Mammary epithelial cell (primary cell): ENCODE measurements at regions of chr11 and their contacts with region 1.

Region 1: DNA sequence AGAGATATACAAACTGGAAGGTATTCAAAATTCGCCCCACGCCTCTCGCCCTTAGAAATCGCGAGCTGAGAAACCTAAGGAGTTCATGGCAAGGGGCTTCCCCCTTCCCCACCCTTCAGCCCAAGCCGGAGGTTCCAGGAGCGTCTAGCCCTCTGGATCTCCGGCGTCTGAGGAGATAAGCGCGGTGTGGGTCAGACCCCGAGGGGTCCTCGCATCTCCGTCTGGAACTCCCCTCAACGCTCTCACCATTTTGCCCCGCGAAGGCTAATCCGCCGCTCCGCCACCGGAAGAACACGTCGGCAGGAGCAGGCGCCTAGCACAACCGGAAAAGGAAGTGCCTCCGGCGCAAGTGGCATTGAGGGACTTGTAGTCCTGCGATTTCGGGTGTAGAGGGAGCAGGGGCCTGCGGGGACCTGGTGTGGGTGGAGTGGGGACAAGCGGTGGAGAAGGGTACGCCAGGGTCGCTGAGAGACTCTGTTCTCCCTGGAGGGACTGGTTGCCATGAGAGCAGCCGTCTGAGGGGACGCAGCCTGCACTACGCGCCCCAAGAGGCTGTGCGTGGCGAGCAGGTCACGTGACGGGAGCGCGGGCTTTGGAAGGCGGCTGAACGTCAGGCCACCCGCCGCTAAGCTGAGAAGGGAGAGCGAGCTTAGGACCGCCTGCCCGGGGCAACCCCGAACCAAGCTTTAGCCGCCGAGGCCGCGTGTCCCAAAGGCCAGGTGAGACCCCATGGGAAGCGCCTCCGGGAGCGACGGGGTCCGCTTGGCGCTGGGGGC is at the starts of genes FEN1 and TMEM258:
- DNase-seq: peak; percentile 95
- H3K4me3 ChIP-seq: peak within 1 kb of the TSS; percentile 63 to 93 (median 92)
- H3K27ac ChIP-seq: peak within 1 kb of the TSS; percentile 96
- H3K4me1 ChIP-seq: peaks cover 13% of the 10 kb centered on the region
- H3K27me3 ChIP-seq: no peaks in the 10 kb centered on the region
- CTCF ChIP-seq: no peak
- total RNA-seq, gene FEN1: 11.7 to 46.1 TPM
- total RNA-seq, gene TMEM258: 48.2 to 99.7 TPM

Region 2: GRCh38 chr11:61695917-61696316 is 96.6 kb before region 1 on chr11:
- CTCF ChIA-PET with region 1: no interaction called
- dilution Hi-C with region 1: no loop called
- in situ Hi-C with region 1: no loop called
- intact Hi-C with region 1: loop called (anchors 1 kb)
- DNase-seq: peak; percentile 91
- H3K4me3 ChIP-seq: no peak overlapping the region
- H3K27ac ChIP-seq: peak overlapping the region; percentile 28
- H3K4me1 ChIP-seq: peaks cover 60% of the 10 kb centered on the region
- H3K27me3 ChIP-seq: no peaks in the 10 kb centered on the region
- CTCF ChIP-seq: no peak

Region 3: GRCh38 chr11:61827571-61828378 is 35.3 kb after region 1 on chr11 and contains the start of gene FADS2:
- CTCF ChIA-PET with region 1: no interaction called
- dilution Hi-C with region 1: no loop called
- in situ Hi-C with region 1: no loop called
- intact Hi-C with region 1: loop called (anchors 1 kb)
- DNase-seq: peak; percentile 60
- H3K4me3 ChIP-seq: peak within 1 kb of the TSS; percentile 50 to 74 (median 58)
- H3K27ac ChIP-seq: no peak within 1 kb of the TSS
- H3K4me1 ChIP-seq: peaks cover 11% of the 10 kb centered on the region
- H3K27me3 ChIP-seq: no peaks in the 10 kb centered on the region
- CTCF ChIP-seq: no peak
- total RNA-seq, gene FADS2: 70.7 to 222 TPM

Region 4: DNA sequence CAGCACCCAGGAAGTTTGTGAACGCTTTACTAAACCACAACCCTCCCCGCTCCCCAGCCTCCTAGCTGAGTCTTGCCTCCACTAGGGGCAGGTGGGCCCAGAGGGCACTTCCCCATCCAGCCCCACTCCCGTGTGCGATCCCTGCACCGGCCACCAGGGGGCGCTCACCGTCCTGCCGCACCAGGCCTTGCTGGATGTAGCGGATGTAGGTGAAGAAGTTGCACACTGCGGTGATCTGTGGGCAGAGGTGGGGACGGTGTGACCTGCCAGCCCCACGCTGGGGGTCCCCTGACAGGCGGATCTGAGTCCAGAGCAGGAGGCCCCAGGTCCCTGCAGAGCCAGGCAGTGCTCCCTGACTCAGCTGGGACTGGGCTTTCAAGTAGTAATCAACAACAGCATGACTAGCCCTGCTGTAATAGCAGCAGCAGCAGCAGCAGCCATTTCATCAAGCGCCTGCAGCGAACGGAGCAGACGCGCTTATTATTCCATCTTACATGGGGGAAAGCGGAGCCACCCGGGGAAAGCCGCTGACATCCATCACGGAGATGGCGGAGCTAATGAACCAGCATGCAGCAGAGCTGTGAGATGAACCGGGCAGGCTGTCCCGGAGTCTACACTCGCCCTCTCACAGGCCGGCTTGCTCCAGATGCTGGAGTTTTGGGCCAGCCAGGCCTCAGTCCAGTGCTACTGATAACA is 106.8 kb after region 1 on chr11:
- CTCF ChIA-PET with region 1: no interaction called
- dilution Hi-C with region 1: no loop called
- in situ Hi-C with region 1: no loop called
- intact Hi-C with region 1: loop called (anchors 1 kb)
- DNase-seq: peak; percentile 52
- H3K4me3 ChIP-seq: no peak overlapping the region
- H3K27ac ChIP-seq: no peak overlapping the region
- H3K4me1 ChIP-seq: peaks cover 19% of the 10 kb centered on the region
- H3K27me3 ChIP-seq: no peaks in the 10 kb centered on the region
- CTCF ChIP-seq: peak; percentile 96 to 99

Region 5: GRCh38 chr11:62054484-62055121 is 262.1 kb after region 1 on chr11:
- CTCF ChIA-PET with region 1: interaction called, 3 read pairs
- dilution Hi-C with region 1: no loop called
- in situ Hi-C with region 1: loop called in 1 of 2 experiments (anchors 25 kb)
- intact Hi-C with region 1: loop called (anchors 2 kb)
- DNase-seq: peak; percentile 42
- H3K4me3 ChIP-seq: no peak overlapping the region
- H3K27ac ChIP-seq: no peak overlapping the region
- H3K4me1 ChIP-seq: peaks cover 8% of the 10 kb centered on the region
- H3K27me3 ChIP-seq: no peaks in the 10 kb centered on the region
- CTCF ChIP-seq: peak; percentile 74 to 87

Region 6: GRCh38 chr11:62108017-62108750 is 315.7 kb after region 1 on chr11:
- CTCF ChIA-PET with region 1: interaction called, 5 read pairs
- dilution Hi-C with region 1: no loop called
- in situ Hi-C with region 1: no loop called
- intact Hi-C with region 1: loop called (anchors 1 kb)
- DNase-seq: peak; percentile 42
- H3K4me3 ChIP-seq: no peak overlapping the region
- H3K27ac ChIP-seq: no peak overlapping the region
- H3K4me1 ChIP-seq: peaks cover 7% of the 10 kb centered on the region
- H3K27me3 ChIP-seq: no peaks in the 10 kb centered on the region
- CTCF ChIP-seq: peak; percentile 76 to 77